ENCODE measurements at regions of chr13 and their contacts with region 1.

Region 1: DNA sequence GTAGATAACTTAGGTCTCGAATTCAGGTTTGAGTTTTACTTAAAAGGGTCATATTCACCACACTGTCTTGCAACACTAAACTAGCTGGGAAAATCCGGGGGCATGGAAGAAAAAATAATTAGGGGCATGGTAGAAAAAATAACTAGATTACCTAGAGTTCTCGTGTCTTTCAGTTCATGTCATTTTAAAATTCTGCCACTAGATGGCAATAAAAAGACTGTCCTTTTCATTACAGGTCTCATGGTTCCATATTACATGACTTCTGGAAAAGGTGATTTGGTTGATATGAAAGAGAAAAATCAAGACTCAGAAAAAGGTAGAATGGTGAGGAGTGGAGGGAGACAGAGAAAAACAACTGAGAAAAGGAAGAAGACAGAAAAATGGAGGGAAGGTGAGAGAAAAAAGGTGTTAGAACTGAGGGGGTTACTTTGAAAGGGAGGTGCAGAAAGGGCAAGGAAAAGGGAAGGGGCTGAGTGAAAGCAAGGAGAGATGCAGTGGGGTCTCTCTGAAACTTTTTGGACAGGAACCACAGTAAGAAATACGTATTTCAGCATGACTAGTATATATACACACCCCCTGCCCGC is 299.0 kb downstream of the KLF12 start:
- DNase-seq: peak in 7 of 9 donors; percentile 16 to 60 (median 54)
- ATAC-seq: peak; percentile 64
- H3K4me3 ChIP-seq: no peak overlapping the region
- H3K4me3 Mint-ChIP-seq: no peak overlapping the region
- H3K27ac ChIP-seq: no peak overlapping the region
- H3K27ac Mint-ChIP-seq: no peak overlapping the region
- H3K4me1 ChIP-seq: peaks cover 7 to 41% of the 10 kb centered on the region in 2 donors
- H3K4me1 Mint-ChIP-seq: peaks cover 5 to 71% (median 43%) of the 10 kb centered on the region in 7 donors
- H3K27me3 ChIP-seq: no peaks in the 10 kb centered on the region
- H3K27me3 Mint-ChIP-seq: no peaks in the 10 kb centered on the region

Region 2: DNA sequence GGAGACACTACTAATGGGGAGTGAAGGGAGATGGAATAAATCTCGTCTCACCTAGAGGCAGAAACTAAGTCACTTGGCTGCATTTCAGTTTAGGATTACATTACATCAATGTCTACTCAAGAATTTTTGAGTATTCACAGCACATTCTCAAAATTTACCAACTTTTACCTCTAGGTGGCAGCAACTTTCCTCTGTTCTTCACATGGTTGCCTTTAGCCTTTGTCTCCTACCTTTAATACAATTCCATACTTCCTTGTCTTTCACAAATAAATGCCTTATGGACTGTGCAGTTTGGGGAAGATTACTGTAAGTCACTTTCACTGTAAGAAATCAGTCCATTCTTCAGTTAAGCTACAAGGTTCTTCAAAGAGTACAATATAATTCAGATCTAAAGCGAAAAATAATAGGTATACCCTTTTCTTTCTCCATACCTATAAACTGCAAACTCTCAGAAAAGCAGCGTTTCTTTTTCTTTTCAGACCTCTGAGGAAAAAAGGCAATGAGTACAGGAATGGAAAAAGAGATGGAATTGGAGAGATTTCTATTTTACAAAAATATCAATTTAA is 80.4 kb before region 1 on chr13:
- CTCF ChIA-PET with region 1: no interaction called
- POLR2A ChIA-PET with region 1: interaction called, 5 read pairs
- intact Hi-C with region 1: loop called in 1 of 2 experiments (anchors 1 kb)
- DNase-seq: peak in 7 of 9 donors; percentile 32 to 69 (median 59)
- ATAC-seq: peak; percentile 67
- H3K4me3 ChIP-seq: no peak overlapping the region
- H3K4me3 Mint-ChIP-seq: peak overlapping the region in 1 of 10 donors; percentile 5
- H3K27ac ChIP-seq: no peak overlapping the region
- H3K27ac Mint-ChIP-seq: peak overlapping the region; percentile 11 to 96 (median 79)
- H3K4me1 ChIP-seq: peaks cover 0 to 19% of the 10 kb centered on the region in 2 donors
- H3K4me1 Mint-ChIP-seq: peaks cover 13 to 76% (median 57%) of the 10 kb centered on the region in 7 donors
- H3K27me3 ChIP-seq: no peaks in the 10 kb centered on the region
- H3K27me3 Mint-ChIP-seq: no peaks in the 10 kb centered on the region

Region 3: GRCh38 chr13:73822668-73823592 is 12.3 kb before region 1 on chr13:
- CTCF ChIA-PET with region 1: interaction called, 3 read pairs
- POLR2A ChIA-PET with region 1: no interaction called
- intact Hi-C with region 1: loop called in 1 of 2 experiments (anchors 1 kb)
- DNase-seq: no peak
- ATAC-seq: no peak
- H3K4me3 ChIP-seq: no peak overlapping the region
- H3K4me3 Mint-ChIP-seq: peak overlapping the region in 1 of 10 donors; percentile 8
- H3K27ac ChIP-seq: no peak overlapping the region
- H3K27ac Mint-ChIP-seq: peak overlapping the region in 8 of 9 donors; percentile 1 to 87 (median 33)
- H3K4me1 ChIP-seq: peaks cover 0 to 19% of the 10 kb centered on the region in 2 donors
- H3K4me1 Mint-ChIP-seq: peaks cover 22 to 85% (median 72%) of the 10 kb centered on the region in 7 donors
- H3K27me3 ChIP-seq: no peaks in the 10 kb centered on the region
- H3K27me3 Mint-ChIP-seq: no peaks in the 10 kb centered on the region

Region 4: GRCh38 chr13:73849292-73849691 is 14.1 kb after region 1 on chr13:
- CTCF ChIA-PET with region 1: interaction called, 7 read pairs
- POLR2A ChIA-PET with region 1: no interaction called
- intact Hi-C with region 1: loop called in 1 of 2 experiments (anchors 2 kb)
- DNase-seq: peak in 4 of 9 donors; percentile 8 to 30 (median 21)
- ATAC-seq: no peak
- H3K4me3 ChIP-seq: no peak overlapping the region
- H3K4me3 Mint-ChIP-seq: peak overlapping the region in 4 of 10 donors; percentile 6 to 65 (median 47)
- H3K27ac ChIP-seq: no peak overlapping the region
- H3K27ac Mint-ChIP-seq: peak overlapping the region in 6 of 9 donors; percentile 3 to 86 (median 64)
- H3K4me1 ChIP-seq: peaks cover 10 to 16% of the 10 kb centered on the region in 2 donors
- H3K4me1 Mint-ChIP-seq: peaks cover 6 to 64% (median 51%) of the 10 kb centered on the region in 7 donors
- H3K27me3 ChIP-seq: no peaks in the 10 kb centered on the region
- H3K27me3 Mint-ChIP-seq: no peaks in the 10 kb centered on the region

Region 5: GRCh38 chr13:74194846-74195245 is 359.6 kb after region 1 on chr13:
- CTCF ChIA-PET with region 1: no interaction called
- POLR2A ChIA-PET with region 1: no interaction called
- intact Hi-C with region 1: loop called in 1 of 2 experiments (anchors 2 kb)
- DNase-seq: peak in 5 of 9 donors; percentile 3 to 22 (median 16)
- ATAC-seq: no peak
- H3K4me3 ChIP-seq: no peak overlapping the region
- H3K4me3 Mint-ChIP-seq: peak overlapping the region in 4 of 10 donors; percentile 23 to 57 (median 40)
- H3K27ac ChIP-seq: no peak overlapping the region
- H3K27ac Mint-ChIP-seq: peak overlapping the region in 5 of 9 donors; percentile 21 to 89 (median 50)
- H3K4me1 ChIP-seq: peaks cover 6 to 26% of the 10 kb centered on the region in 2 donors
- H3K4me1 Mint-ChIP-seq: peaks cover 15 to 43% (median 41%) of the 10 kb centered on the region in 7 donors
- H3K27me3 ChIP-seq: no peaks in the 10 kb centered on the region
- H3K27me3 Mint-ChIP-seq: peaks cover 0 to under 1% (median 0%) of the 10 kb centered on the region in 5 donors

Region 6: DNA sequence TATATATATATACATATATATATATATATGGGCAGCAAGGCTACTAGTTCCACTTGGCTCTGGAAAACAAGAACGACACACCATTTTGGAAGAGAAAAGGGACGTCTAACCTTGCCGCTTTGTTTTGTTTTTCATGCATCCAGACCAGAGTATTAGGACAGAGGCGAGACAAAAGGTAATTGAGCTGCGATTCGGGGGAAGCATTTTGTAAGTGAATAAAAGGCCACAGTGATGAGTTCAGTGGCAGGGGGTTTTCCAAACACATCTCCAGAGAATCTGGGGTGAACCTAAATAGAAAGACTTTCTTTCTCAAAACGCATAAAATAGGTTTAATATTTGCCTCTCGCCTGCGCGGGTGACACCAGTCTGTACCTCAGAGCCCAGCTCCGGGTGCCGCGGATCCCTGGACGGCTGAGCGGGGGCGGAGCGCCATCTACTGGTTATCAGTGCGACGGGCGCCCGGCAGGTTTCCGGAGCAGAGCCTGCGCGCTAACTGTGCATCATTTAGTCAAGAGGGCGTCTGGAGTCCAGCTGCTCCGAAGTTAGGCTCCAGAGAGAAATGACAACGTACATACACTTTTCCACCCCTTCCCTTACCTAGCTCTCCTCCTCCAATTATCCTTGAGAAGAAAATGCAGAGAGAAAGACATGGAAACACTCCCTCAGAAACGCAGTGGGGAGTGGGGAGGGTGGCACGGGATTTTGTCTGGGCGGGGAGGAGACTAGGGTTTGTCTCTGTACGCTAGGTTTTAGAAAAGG is 1384.4 kb after region 1 on chr13:
- CTCF ChIA-PET with region 1: no interaction called
- POLR2A ChIA-PET with region 1: no interaction called
- intact Hi-C with region 1: loop called (anchors 1 kb)
- DNase-seq: peak; percentile 67 to 87 (median 79)
- ATAC-seq: peak; percentile 96
- H3K4me3 ChIP-seq: no peak overlapping the region
- H3K4me3 Mint-ChIP-seq: peak overlapping the region; percentile 28 to 77 (median 58)
- H3K27ac ChIP-seq: no peak overlapping the region
- H3K27ac Mint-ChIP-seq: peak overlapping the region in 2 of 9 donors; percentile 34 to 87
- H3K4me1 ChIP-seq: peaks cover 0 to 4% of the 10 kb centered on the region in 2 donors
- H3K4me1 Mint-ChIP-seq: peaks cover 6 to 7% (median 7%) of the 10 kb centered on the region in 7 donors
- H3K27me3 ChIP-seq: no peaks in the 10 kb centered on the region
- H3K27me3 Mint-ChIP-seq: peaks cover 15 to 48% (median 27%) of the 10 kb centered on the region in 5 donors